ENCODE measurements at regions of chr9 and their contacts with region 1.

Region 1: GRCh38 chr9:20028849-20029231 is 240.0 kb upstream of the SLC24A2 start:
- DNase-seq: peak; percentile 73
- H3K4me3 ChIP-seq: no peak overlapping the region
- H3K27ac ChIP-seq: peak overlapping the region; percentile 64
- H3K4me1 ChIP-seq: peaks cover 28% of the 10 kb centered on the region
- H3K27me3 ChIP-seq: no peaks in the 10 kb centered on the region
- CTCF ChIP-seq: no peak
- POLR2A ChIP-seq: no peak

Region 2: GRCh38 chr9:19799784-19800183 is 229.1 kb before region 1 on chr9:
- CTCF ChIA-PET with region 1: no interaction called
- POLR2A ChIA-PET with region 1: no interaction called
- dilution Hi-C with region 1: no loop called
- intact Hi-C with region 1: no loop called
- DNase-seq: no peak
- H3K4me3 ChIP-seq: no peak overlapping the region
- H3K27ac ChIP-seq: no peak overlapping the region
- H3K4me1 ChIP-seq: no peaks in the 10 kb centered on the region
- H3K27me3 ChIP-seq: no peaks in the 10 kb centered on the region
- CTCF ChIP-seq: no peak
- POLR2A ChIP-seq: no peak

Region 3: DNA sequence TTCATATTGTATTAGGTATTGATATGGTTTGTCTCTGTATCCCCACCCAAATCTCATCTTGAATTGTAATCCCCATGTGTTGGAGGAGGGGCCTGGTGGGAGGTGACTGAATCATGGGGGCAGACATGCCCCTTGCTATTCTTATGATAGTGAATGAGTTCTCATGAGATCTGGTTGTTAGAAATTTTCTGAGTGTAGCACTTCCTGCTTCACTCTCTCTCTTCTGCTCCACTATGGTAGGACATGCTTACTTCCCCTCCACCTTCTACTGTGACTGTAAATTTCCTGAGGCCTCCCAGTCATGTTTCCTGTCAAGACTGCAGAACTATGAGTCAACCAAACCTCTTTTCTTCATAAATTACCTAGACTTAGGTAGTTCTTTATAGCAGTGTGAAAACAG is 52.6 kb before region 1 on chr9:
- CTCF ChIA-PET with region 1: no interaction called
- POLR2A ChIA-PET with region 1: no interaction called
- dilution Hi-C with region 1: no loop called
- intact Hi-C with region 1: loop called (anchors 1 kb)
- DNase-seq: peak; percentile 63
- H3K4me3 ChIP-seq: no peak overlapping the region
- H3K27ac ChIP-seq: peak overlapping the region; percentile 66
- H3K4me1 ChIP-seq: peaks cover 19% of the 10 kb centered on the region
- H3K27me3 ChIP-seq: no peaks in the 10 kb centered on the region
- CTCF ChIP-seq: no peak
- POLR2A ChIP-seq: no peak

Region 4: DNA sequence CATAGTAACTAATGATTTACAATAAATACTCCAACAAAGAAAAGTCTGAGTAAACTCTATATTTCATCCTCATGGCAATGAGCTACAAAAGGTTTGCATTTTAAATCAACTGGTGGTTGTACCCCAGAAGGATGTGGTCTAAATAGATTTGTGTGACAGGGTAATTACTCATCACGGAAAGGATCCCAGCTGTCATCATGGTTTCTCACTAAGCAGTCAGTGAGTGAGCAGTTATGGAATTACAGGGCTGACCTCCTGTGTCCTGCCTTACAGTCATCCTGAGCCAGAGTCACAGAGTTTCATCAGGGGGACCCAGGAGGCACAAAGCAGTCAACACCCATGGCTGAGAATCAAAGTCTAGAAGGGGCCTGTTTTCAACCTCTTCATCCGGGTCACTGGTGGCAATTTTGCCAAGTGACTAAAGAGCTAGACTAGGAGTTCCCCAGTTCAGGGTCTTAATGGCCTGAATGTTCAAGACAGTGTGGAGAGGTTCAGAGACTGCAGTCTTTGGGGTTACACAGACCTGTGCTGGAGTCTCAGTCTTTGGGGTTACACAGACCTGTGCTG is 29.3 kb before region 1 on chr9:
- CTCF ChIA-PET with region 1: no interaction called
- POLR2A ChIA-PET with region 1: no interaction called
- dilution Hi-C with region 1: no loop called
- intact Hi-C with region 1: loop called (anchors 2 kb)
- DNase-seq: peak; percentile 76
- H3K4me3 ChIP-seq: no peak overlapping the region
- H3K27ac ChIP-seq: peak overlapping the region; percentile 66
- H3K4me1 ChIP-seq: peaks cover 30% of the 10 kb centered on the region
- H3K27me3 ChIP-seq: no peaks in the 10 kb centered on the region
- CTCF ChIP-seq: no peak
- POLR2A ChIP-seq: no peak

Region 5: DNA sequence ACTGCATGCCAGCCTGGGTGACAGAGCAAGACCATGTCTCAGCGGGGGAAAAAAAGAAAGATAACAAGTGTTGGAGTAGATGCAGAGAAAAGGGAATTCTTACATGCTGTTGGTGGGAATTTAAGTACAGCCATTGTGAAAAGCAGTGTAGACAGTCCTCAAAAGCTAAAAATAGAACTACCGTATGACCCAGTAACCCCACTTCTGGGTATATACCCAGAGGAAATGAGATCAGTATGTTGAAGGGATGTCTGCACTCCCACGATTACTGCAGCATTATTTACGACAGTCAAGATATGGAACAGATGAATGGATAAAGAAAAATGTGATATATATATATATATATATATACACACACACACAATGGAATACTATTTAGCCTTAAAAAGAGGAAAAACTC is 14.7 kb before region 1 on chr9:
- CTCF ChIA-PET with region 1: no interaction called
- POLR2A ChIA-PET with region 1: no interaction called
- dilution Hi-C with region 1: no loop called
- intact Hi-C with region 1: loop called (anchors 1 kb)
- DNase-seq: peak; percentile 46
- H3K4me3 ChIP-seq: no peak overlapping the region
- H3K27ac ChIP-seq: peak overlapping the region; percentile 20
- H3K4me1 ChIP-seq: peaks cover 12% of the 10 kb centered on the region
- H3K27me3 ChIP-seq: no peaks in the 10 kb centered on the region
- CTCF ChIP-seq: no peak
- POLR2A ChIP-seq: no peak

Region 6: DNA sequence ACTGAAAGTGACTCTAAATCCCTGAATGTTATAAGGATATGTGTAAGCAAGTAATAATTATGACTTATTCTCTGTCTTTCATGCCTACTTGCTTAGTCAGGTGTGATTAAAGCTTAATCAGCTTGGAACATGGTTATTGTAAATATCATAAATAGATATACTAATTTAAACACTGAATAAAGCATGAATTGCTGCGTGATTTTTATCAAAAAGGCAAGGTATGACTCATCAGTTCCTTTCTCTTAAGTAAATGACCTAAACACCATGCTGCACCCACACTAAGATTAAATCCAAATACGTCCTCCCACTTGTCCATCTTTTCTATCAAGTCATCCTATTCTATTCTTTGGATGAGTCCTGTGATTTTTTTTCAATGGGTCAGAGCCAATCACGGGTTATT is 1649.0 kb after region 1 on chr9:
- CTCF ChIA-PET with region 1: no interaction called
- POLR2A ChIA-PET with region 1: no interaction called
- dilution Hi-C with region 1: no loop called
- intact Hi-C with region 1: no loop called
- DNase-seq: peak; percentile 88
- H3K4me3 ChIP-seq: peak overlapping the region in 1 of 3 experiments; percentile 59
- H3K27ac ChIP-seq: peak overlapping the region; percentile 85
- H3K4me1 ChIP-seq: peaks cover 58% of the 10 kb centered on the region
- H3K27me3 ChIP-seq: no peaks in the 10 kb centered on the region
- CTCF ChIP-seq: no peak
- POLR2A ChIP-seq: no peak